ENCODE measurements at regions of chr16 and their contacts with region 1.

Region 1: GRCh38 chr16:66416939-66417700 is 10.0 kb upstream of the BEAN1 start:
- DNase-seq: no peak

Region 2: GRCh38 chr16:66205287-66206231 is 211.6 kb before region 1 on chr16:
- intact Hi-C with region 1: no loop called
- DNase-seq: no peak

Region 3: DNA sequence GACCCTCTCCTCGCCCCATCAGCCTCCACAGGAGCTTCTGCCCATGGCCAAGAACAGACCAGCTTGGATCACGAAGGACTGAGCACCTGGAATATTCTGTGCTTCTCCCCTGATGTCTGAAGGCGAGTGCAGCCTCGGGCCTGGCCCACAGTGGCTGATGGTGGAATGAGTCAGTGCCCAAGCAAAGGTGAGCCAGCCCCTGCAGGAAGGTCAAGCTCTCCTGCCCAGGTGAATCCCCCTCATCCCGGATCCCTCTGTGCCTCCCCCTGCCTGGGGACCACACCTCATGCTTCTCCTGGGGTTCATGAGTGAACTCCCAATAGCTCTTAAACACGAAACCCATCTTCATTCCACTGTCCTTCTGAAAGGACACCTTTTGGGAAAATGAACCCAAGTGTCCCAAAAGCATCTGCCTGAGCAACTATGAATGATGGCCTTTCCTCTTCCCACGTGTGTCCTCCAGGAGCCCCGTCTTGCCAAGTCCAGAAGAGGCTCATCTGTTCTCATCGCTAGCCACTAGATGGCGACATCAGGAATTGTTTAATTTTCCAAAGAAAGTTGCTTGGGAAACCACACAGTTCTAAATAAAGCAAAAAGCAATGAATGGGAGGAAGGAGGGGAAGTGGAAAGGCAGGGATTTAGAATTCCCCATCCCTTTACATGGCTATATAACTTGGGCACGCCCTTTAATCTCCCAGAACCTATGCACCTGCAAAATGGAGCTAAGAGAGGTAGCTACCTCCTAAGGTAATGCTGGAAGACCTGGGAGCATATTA is 59.8 kb before region 1 on chr16:
- intact Hi-C with region 1: loop called in 1 of 2 experiments (anchors 10 kb)
- DNase-seq: no peak

Region 4: DNA sequence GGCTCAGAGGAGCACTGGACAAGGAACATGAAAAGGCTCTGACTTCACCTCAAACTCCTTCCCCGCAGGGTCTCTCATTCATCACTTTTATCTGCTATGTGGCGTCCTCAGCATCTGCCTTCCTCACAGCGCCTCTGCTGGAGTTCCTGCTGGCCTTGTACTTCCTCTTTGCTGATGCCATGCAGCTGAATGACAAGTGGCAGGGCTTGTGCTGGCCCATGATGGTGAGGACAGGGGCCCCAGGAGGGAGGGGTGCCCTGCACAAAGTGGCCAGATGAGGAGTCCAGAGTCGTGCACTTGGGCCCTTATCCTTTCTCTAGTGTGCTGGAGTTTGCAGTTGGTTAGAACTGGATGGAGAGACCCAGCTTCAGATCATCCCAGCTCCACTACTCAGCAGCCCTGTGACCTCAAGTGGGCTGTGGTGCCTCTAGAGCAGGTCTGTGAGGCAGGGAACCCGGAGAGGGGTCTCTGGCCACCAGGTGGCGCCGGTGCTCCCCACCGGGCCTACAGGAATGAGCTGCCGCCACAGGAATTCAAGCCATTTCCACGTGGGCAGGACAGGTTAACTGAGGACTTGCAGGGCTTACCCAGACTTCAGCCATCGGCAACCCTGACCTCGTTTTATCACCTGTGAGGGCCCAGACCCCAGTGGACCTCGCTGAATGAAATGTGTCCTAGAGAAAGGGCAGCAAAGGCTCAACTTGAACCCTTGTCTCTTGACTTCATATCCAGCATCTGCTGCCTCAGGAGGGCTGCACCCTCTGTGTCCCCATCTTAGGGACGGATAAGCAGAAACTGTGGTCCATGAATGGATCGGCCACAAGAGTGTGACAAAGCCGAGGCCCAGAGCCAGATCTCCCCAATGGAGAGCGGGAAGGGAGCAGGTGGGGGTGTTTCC is 191.4 kb after region 1 on chr16:
- intact Hi-C with region 1: loop called in 1 of 2 experiments (anchors 5 kb)
- DNase-seq: peak; percentile 94